ENCODE measurements at regions of chr4 and their contacts with region 1.

Region 1: DNA sequence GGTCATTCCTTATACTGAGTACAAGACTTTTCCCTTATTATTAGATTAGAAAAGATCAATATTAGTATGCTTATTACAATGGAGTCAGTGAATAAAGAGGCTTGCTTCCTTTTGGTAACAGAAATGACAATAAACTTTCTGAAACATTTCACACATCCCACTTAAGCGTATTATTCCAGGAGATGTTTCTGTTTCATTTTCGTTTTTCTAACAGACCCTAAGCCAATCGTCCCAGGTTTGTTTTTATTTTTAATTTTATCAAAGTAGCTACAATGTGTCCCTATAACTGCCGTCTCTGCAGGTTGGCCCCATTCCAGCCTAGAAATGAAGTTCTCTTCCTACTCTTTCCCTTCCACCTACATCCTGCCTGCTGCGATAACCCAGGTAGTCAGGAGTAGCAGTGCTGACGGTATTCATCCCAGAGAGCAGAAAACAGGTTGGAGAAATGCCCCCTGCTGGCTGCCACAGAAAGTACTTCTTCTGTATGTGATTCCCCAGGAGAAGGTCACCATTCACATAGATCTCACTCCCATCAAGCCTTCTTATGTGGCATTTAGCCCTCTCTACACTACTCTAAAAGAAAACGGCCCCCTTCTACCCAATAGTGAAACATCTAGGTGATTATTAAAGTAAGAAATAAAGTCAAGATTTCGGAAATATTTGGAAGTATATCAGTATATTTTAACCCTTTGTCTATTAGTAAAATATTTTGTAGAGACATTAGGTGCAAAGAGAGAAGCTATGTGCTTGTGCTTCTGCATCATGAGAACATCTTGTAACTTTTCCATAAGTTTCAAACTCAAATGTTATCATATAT is 40.4 kb downstream of the ENPEP start:
- DNase-seq: peak; percentile 34 to 63
- ATAC-seq: peak; percentile 64 to 89 (median 82)
- H3K4me3 ChIP-seq: peak overlapping the region; percentile 53
- H3K27ac ChIP-seq: no peak overlapping the region
- H3K4me1 ChIP-seq: no peaks in the 10 kb centered on the region
- H3K27me3 ChIP-seq: no peaks in the 10 kb centered on the region
- CTCF ChIP-seq: peak; percentile 67

Region 2: DNA sequence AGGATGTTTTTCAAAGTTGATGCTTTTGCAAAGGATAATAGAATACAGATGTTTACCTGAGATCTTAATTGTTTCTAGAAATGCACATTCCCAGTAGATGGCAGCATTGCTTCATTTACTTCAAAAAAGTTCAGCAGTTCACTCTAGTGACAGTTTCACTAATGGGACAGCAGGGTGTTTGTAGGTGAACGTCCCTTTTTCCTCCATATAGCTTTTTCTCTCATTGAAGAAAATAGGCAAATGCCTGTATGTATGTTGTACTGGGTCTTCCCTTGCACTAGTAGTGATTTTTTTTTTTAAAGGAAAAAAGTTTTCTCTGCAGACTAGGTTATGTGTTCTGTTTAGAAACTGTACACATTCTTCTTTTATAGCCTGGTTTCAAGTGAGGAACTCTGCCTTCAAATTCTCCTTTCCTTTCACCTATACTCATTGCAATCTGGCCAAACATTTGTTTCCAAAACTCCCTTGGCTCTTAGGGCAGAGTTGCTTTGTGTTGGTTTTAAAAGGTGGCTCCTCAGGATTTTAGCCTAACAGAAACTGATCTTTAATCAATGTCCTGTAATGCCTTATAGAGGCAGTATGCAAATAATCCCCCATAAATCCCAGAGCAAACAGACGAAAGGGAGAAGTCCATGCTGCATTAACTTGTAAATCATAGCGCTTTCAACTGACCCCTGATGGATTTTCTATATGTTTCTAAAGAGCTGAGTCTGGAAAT is 517.3 kb before region 1 on chr4:
- intact Hi-C with region 1: loop called (anchors 5 to 10 kb)
- DNase-seq: no peak
- ATAC-seq: peak in 3 of 4 donors; percentile 32 to 54 (median 40)
- H3K4me3 ChIP-seq: no peak overlapping the region
- H3K27ac ChIP-seq: no peak overlapping the region
- H3K4me1 ChIP-seq: no peaks in the 10 kb centered on the region
- H3K27me3 ChIP-seq: no peaks in the 10 kb centered on the region
- CTCF ChIP-seq: peak; percentile 55

Region 3: GRCh38 chr4:110310795-110311194 is 205.5 kb before region 1 on chr4:
- intact Hi-C with region 1: loop called in 1 of 2 experiments (anchors 10 kb)
- DNase-seq: no peak
- ATAC-seq: no peak
- H3K4me3 ChIP-seq: no peak overlapping the region
- H3K27ac ChIP-seq: no peak overlapping the region
- H3K4me1 ChIP-seq: no peaks in the 10 kb centered on the region
- H3K27me3 ChIP-seq: no peaks in the 10 kb centered on the region
- CTCF ChIP-seq: no peak

Region 4: GRCh38 chr4:110344162-110344561 is 172.2 kb before region 1 on chr4:
- intact Hi-C with region 1: loop called (anchors 2 to 5 kb)
- DNase-seq: no peak
- ATAC-seq: peak in 1 of 4 donors; percentile 67
- H3K4me3 ChIP-seq: no peak overlapping the region
- H3K27ac ChIP-seq: no peak overlapping the region
- H3K4me1 ChIP-seq: no peaks in the 10 kb centered on the region
- H3K27me3 ChIP-seq: no peaks in the 10 kb centered on the region
- CTCF ChIP-seq: peak; percentile 25

Region 5: GRCh38 chr4:110808351-110808878 is 292.1 kb after region 1 on chr4:
- intact Hi-C with region 1: no loop called
- DNase-seq: no peak
- ATAC-seq: no peak
- H3K4me3 ChIP-seq: no peak overlapping the region
- H3K27ac ChIP-seq: no peak overlapping the region
- H3K4me1 ChIP-seq: no peaks in the 10 kb centered on the region
- H3K27me3 ChIP-seq: no peaks in the 10 kb centered on the region
- CTCF ChIP-seq: no peak

Measured in psoas muscle (tissue), 8 donors.